Mammary epithelial cell (primary cell): ENCODE measurements at regions of chr6 and their contacts with region 1.

Region 1: DNA sequence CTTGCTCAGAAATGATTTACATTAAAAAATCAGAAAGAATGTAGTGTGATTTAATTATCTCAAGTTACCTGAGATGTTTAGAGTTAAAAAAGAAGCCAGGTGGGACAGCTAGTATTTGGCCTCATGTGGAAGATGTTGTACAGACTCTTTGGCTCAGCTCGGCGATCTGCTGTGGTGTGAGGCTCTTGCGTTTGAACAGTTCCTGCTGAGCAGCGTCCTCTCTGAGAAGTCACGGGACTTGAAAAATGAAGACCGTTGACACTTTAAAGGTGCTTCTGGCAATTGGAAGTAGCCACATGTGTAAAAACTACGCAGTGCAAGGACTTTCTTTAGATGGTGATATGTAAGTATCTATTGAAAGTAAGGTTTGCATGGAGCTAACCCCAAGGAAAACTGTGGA is 169.0 kb downstream of the BACH2 start:
- DNase-seq: no peak
- H3K4me3 ChIP-seq: no peak overlapping the region
- H3K27ac ChIP-seq: no peak overlapping the region
- H3K4me1 ChIP-seq: peaks cover 6% of the 10 kb centered on the region
- H3K27me3 ChIP-seq: no peaks in the 10 kb centered on the region
- CTCF ChIP-seq: no peak

Region 2: GRCh38 chr6:90078513-90079289 is 48.9 kb before region 1 on chr6:
- CTCF ChIA-PET with region 1: no interaction called
- dilution Hi-C with region 1: no loop called
- in situ Hi-C with region 1: no loop called
- intact Hi-C with region 1: no loop called
- DNase-seq: no peak
- H3K4me3 ChIP-seq: no peak overlapping the region
- H3K27ac ChIP-seq: no peak overlapping the region
- H3K4me1 ChIP-seq: peaks cover 7% of the 10 kb centered on the region
- H3K27me3 ChIP-seq: no peaks in the 10 kb centered on the region
- CTCF ChIP-seq: no peak

Region 3: GRCh38 chr6:90160013-90160412 is 32.4 kb after region 1 on chr6:
- CTCF ChIA-PET with region 1: no interaction called
- dilution Hi-C with region 1: loop called (anchors 5 kb)
- in situ Hi-C with region 1: no loop called
- intact Hi-C with region 1: no loop called
- DNase-seq: no peak
- H3K4me3 ChIP-seq: no peak overlapping the region
- H3K27ac ChIP-seq: no peak overlapping the region
- H3K4me1 ChIP-seq: peaks cover 14% of the 10 kb centered on the region
- H3K27me3 ChIP-seq: no peaks in the 10 kb centered on the region
- CTCF ChIP-seq: no peak

Region 4: GRCh38 chr6:90204327-90205056 is 76.9 kb after region 1 on chr6:
- CTCF ChIA-PET with region 1: no interaction called
- dilution Hi-C with region 1: loop called (anchors 5 kb)
- in situ Hi-C with region 1: no loop called
- intact Hi-C with region 1: no loop called
- DNase-seq: peak; percentile 50
- H3K4me3 ChIP-seq: no peak overlapping the region
- H3K27ac ChIP-seq: no peak overlapping the region
- H3K4me1 ChIP-seq: peaks cover 7% of the 10 kb centered on the region
- H3K27me3 ChIP-seq: no peaks in the 10 kb centered on the region
- CTCF ChIP-seq: no peak